ENCODE measurements at regions of chr2 and their contacts with region 1.

Region 1: GRCh38 chr2:157443795-157444640 is at the start of gene CYTIP:
- DNase-seq: peak; percentile 71 to 78 (median 76)
- H3K4me3 ChIP-seq: peak within 1 kb of the TSS; percentile 81 to 85
- H3K4me3 Mint-ChIP-seq: peak within 1 kb of the TSS; percentile 90 to 100 (median 98)
- H3K27ac ChIP-seq: peak within 1 kb of the TSS; percentile 85
- H3K27ac Mint-ChIP-seq: peak within 1 kb of the TSS; percentile 94 to 100 (median 95)
- H3K4me1 ChIP-seq: peaks cover 47% of the 10 kb centered on the region
- H3K4me1 Mint-ChIP-seq: peaks cover 33 to 78% (median 38%) of the 10 kb centered on the region in 4 donors
- H3K27me3 ChIP-seq: no peaks in the 10 kb centered on the region
- H3K27me3 Mint-ChIP-seq: no peaks in the 10 kb centered on the region
- total RNA-seq, gene CYTIP: 231 to 248 TPM

Region 2: DNA sequence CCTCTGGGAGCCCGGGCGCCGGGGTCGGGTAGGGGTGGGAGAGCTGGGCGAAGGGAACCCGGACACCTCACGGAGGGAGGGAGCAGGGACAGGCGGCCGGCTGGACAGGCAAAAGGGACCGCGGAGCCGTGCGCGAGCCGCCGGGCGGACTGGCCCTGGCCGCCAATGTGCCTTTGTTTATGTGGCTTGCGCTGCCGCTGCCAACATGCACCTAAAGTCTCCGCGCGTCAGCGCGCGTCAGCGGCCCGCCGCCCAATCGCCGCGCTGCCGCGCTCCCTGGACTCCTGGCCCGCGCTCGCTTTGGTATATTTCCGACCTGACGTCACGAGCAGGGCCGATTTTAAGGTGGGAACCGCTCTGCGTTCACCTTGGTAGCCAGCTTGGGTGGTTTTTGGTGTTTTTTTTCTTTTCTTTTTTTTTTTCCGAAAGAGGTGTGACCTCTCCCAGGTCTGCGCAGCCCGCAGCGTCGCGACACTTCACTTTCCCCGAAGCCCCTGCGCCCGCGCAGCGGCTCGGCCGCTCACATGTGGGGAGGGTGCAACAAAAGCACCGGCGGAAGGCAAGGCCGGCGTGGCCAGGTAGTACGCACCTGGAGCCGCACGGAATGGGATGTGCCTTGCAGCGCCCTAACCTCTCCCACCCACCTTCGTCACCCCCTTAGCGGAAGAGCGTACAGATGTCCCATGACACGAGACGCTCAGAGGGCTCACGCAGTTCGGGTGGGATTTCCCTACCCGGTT is 1111.3 kb before region 1 on chr2 and contains the start of gene NR4A2:
- CTCF ChIA-PET with region 1: no interaction called
- POLR2A ChIA-PET with region 1: interaction called, 5 read pairs
- intact Hi-C with region 1: loop called (anchors 10 kb)
- DNase-seq: peak; percentile 93 to 97 (median 94)
- H3K4me3 ChIP-seq: peak within 1 kb of the TSS; percentile 62 to 91
- H3K4me3 Mint-ChIP-seq: peak within 1 kb of the TSS; percentile 93 to 97 (median 97)
- H3K27ac ChIP-seq: peak within 1 kb of the TSS; percentile 99
- H3K27ac Mint-ChIP-seq: peak within 1 kb of the TSS; percentile 99 to 100 (median 100)
- H3K4me1 ChIP-seq: peaks cover 31% of the 10 kb centered on the region
- H3K4me1 Mint-ChIP-seq: peaks cover 15 to 63% (median 28%) of the 10 kb centered on the region in 4 donors
- H3K27me3 ChIP-seq: no peaks in the 10 kb centered on the region
- H3K27me3 Mint-ChIP-seq: peaks cover 11 to 25% of the 10 kb centered on the region in 2 donors
- total RNA-seq, gene NR4A2: 2.1 TPM

Region 3: DNA sequence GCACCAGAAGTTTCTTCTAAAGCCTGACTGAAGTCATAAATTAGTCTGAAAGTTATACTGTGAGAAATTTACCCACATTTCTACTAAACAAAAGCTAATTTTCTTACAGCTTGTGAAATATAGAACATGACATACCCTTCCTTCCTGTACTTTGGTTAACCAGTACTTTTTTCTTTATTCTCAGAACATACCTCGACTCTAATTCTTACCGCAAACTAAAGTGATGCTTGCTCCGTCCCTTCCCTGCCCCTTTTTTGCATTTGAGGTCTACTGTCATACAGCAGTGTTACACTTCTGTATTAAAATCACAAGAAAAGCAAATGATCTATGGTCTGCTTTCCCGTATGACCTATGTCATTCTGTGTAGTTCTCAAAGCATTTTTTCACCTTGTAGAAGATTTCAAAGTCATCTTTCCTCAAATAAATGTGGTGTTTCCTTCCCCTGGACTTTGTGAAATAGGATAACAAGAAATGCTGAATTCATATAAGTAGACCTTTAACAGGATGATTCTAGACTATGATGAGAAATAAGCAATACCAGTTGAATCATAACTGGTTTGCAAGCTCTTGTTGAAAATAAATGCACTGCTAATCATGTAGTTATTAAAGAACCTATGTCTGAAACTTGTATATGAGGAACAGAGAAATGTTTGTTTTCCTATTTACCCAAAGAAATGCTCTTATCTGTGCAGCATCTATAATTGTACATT is 30.5 kb before region 1 on chr2:
- CTCF ChIA-PET with region 1: interaction called, 38 read pairs
- POLR2A ChIA-PET with region 1: interaction called, 1,017 read pairs
- intact Hi-C with region 1: loop called (anchors 1 kb)
- DNase-seq: peak; percentile 83 to 89 (median 86)
- H3K4me3 ChIP-seq: peak overlapping the region in 1 of 2 donors; percentile 9
- H3K4me3 Mint-ChIP-seq: peak overlapping the region; percentile 24 to 80 (median 71)
- H3K27ac ChIP-seq: peak overlapping the region; percentile 54
- H3K27ac Mint-ChIP-seq: peak overlapping the region; percentile 83 to 98 (median 91)
- H3K4me1 ChIP-seq: peaks cover 97% of the 10 kb centered on the region
- H3K4me1 Mint-ChIP-seq: peaks cover 69 to 91% (median 82%) of the 10 kb centered on the region in 4 donors
- H3K27me3 ChIP-seq: no peaks in the 10 kb centered on the region
- H3K27me3 Mint-ChIP-seq: no peaks in the 10 kb centered on the region

Region 4: GRCh38 chr2:157433394-157433793 is 10.6 kb before region 1 on chr2:
- CTCF ChIA-PET with region 1: interaction called, 20 read pairs
- POLR2A ChIA-PET with region 1: interaction called, 809 read pairs
- intact Hi-C with region 1: loop called (anchors 1 kb)
- DNase-seq: no peak
- H3K4me3 ChIP-seq: peak overlapping the region; percentile 8 to 56
- H3K4me3 Mint-ChIP-seq: peak overlapping the region; percentile 78 to 100 (median 92)
- H3K27ac ChIP-seq: peak overlapping the region; percentile 59
- H3K27ac Mint-ChIP-seq: peak overlapping the region; percentile 80 to 99 (median 91)
- H3K4me1 ChIP-seq: peaks cover 84% of the 10 kb centered on the region
- H3K4me1 Mint-ChIP-seq: peaks cover 62 to 96% (median 77%) of the 10 kb centered on the region in 4 donors
- H3K27me3 ChIP-seq: no peaks in the 10 kb centered on the region
- H3K27me3 Mint-ChIP-seq: no peaks in the 10 kb centered on the region

Region 5: GRCh38 chr2:157492189-157492773 is 48.3 kb after region 1 on chr2:
- CTCF ChIA-PET with region 1: interaction called, 8 read pairs
- POLR2A ChIA-PET with region 1: interaction called, 10 read pairs
- intact Hi-C with region 1: loop called (anchors 1 kb)
- DNase-seq: peak; percentile 65 to 70 (median 69)
- H3K4me3 ChIP-seq: no peak overlapping the region
- H3K4me3 Mint-ChIP-seq: no peak overlapping the region
- H3K27ac ChIP-seq: no peak overlapping the region
- H3K27ac Mint-ChIP-seq: peak overlapping the region in 1 of 7 donors; percentile 65
- H3K4me1 ChIP-seq: peaks cover 8% of the 10 kb centered on the region
- H3K4me1 Mint-ChIP-seq: peaks cover 17 to 19% (median 18%) of the 10 kb centered on the region in 4 donors
- H3K27me3 ChIP-seq: no peaks in the 10 kb centered on the region
- H3K27me3 Mint-ChIP-seq: no peaks in the 10 kb centered on the region

Region 6: GRCh38 chr2:157898591-157898996 is 454.6 kb after region 1 on chr2:
- CTCF ChIA-PET with region 1: interaction called, 3 read pairs
- POLR2A ChIA-PET with region 1: interaction called, 9 read pairs
- intact Hi-C with region 1: loop called (anchors 5 kb)
- DNase-seq: peak in 4 of 5 donors; percentile 15 to 83 (median 32)
- H3K4me3 ChIP-seq: peak overlapping the region in 1 of 2 donors; percentile 11
- H3K4me3 Mint-ChIP-seq: peak overlapping the region; percentile 40 to 95 (median 90)
- H3K27ac ChIP-seq: peak overlapping the region; percentile 51
- H3K27ac Mint-ChIP-seq: peak overlapping the region; percentile 96 to 100 (median 99)
- H3K4me1 ChIP-seq: peaks cover 77% of the 10 kb centered on the region
- H3K4me1 Mint-ChIP-seq: peaks cover 62 to 79% (median 72%) of the 10 kb centered on the region in 4 donors
- H3K27me3 ChIP-seq: no peaks in the 10 kb centered on the region
- H3K27me3 Mint-ChIP-seq: no peaks in the 10 kb centered on the region

Region 7: GRCh38 chr2:159118115-159118858 is 1674.3 kb after region 1 on chr2:
- CTCF ChIA-PET with region 1: no interaction called
- POLR2A ChIA-PET with region 1: no interaction called
- intact Hi-C with region 1: no loop called
- DNase-seq: peak; percentile 54 to 63 (median 62)
- H3K4me3 ChIP-seq: no peak overlapping the region
- H3K4me3 Mint-ChIP-seq: no peak overlapping the region
- H3K27ac ChIP-seq: no peak overlapping the region
- H3K27ac Mint-ChIP-seq: no peak overlapping the region
- H3K4me1 ChIP-seq: no peaks in the 10 kb centered on the region
- H3K4me1 Mint-ChIP-seq: peaks cover 0 to 8% (median 5%) of the 10 kb centered on the region in 4 donors
- H3K27me3 ChIP-seq: peaks cover 5% of the 10 kb centered on the region
- H3K27me3 Mint-ChIP-seq: peaks cover 0 to 3% of the 10 kb centered on the region in 2 donors